Dorsolateral prefrontal cortex (tissue), 120 donors: ENCODE measurements at regions of chr6 and their contacts with region 1.

Region 1: GRCh38 chr6:158972241-158973233 is 27.5 kb downstream of the RSPH3 start:
- DNase-seq: no peak
- H3K4me3 ChIP-seq: no peak overlapping the region
- H3K27ac ChIP-seq: no peak overlapping the region
- H3K27me3 ChIP-seq: no peaks in the 10 kb centered on the region
- CTCF ChIP-seq: peak; percentile 50 to 86 (median 68)

Region 2: GRCh38 chr6:158704181-158704822 is 268.2 kb before region 1 on chr6:
- intact Hi-C with region 1: loop called (anchors 1 to 2 kb)
- DNase-seq: peak; percentile 47 to 85 (median 62)
- H3K4me3 ChIP-seq: peak overlapping the region; percentile 7 to 73 (median 53)
- H3K27ac ChIP-seq: peak overlapping the region in 5 of 59 donors; percentile 43 to 72 (median 69)
- H3K27me3 ChIP-seq: no peaks in the 10 kb centered on the region
- CTCF ChIP-seq: peak; percentile 88 to 100 (median 98)